HEK293 (cell line): ENCODE measurements at regions of chr14 and their contacts with region 1.

Region 1: DNA sequence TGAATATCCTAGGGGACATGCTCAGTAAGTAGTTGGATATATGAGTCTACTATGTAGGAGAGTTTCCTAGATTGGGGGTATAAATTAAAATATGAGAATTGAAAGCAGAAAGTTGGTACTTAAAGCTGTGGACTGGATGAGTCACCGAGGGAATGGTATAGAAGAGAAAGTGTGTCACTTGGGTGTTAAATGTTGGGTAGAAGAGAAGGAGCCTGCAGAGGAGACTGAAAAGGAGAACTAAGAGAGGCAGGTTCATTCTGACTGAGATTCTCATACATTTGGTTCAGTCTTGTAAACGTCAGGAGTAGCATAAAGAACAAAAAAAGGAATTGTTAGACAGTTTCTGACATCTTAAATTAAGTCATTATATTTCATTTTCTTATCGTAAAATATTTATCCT is 19.9 kb downstream of the LRRC9 start:
- H3K4me3 ChIP-seq: no peak overlapping the region
- H3K27ac ChIP-seq: no peak overlapping the region
- H3K4me1 ChIP-seq: no peaks in the 10 kb centered on the region
- CTCF ChIP-seq: no peak

Region 2: GRCh38 chr14:59707778-59708561 is 231.9 kb before region 1 on chr14:
- CTCF ChIA-PET with region 1: no interaction called
- POLR2A ChIA-PET with region 1: interaction called, 11 read pairs
- H3K4me3 ChIP-seq: no peak overlapping the region
- H3K27ac ChIP-seq: no peak overlapping the region
- H3K4me1 ChIP-seq: no peaks in the 10 kb centered on the region
- CTCF ChIP-seq: no peak